ENCODE measurements at regions of chr6 and their contacts with region 1.

Region 1: GRCh38 chr6:89940225-89941027 is 46.2 kb downstream of the GJA10 start:
- DNase-seq: peak; percentile 77
- H3K4me3 ChIP-seq: no peak overlapping the region
- H3K27ac ChIP-seq: no peak overlapping the region
- H3K27me3 ChIP-seq: no peaks in the 10 kb centered on the region
- CTCF ChIP-seq: peak; percentile 81

Region 2: DNA sequence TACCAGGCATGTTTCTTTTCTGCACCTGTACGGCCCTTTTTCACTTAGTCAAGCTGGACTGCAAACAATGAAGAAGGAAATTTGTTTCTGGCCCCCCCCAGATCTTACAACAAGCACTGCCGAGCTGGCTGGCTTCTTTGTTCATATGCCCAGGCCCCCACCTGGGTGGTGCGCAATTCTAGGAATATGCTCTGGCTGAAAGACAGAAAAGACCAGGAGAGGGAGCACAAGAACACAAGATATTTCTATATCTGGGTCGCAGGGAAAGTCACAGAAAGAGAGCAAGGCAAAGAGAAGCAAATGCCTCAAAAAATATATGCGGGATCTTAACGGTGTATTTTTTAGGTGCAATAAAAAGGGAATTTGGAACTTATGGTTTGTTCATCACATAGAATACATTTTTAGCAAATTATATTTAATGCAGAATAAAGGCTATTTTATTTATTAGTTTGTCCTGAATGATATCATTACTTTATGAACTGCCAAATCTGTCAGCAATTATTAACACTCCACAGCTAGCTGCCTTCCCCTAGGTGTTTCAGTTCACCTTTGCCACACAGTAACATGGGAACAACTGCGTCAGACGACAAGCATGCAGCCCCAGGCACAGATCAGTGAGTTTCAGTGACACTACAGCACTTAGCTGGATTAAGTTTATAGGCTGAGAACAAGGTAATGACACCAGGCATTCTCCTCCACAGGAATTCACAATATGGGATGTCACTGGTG is 30.3 kb after region 1 on chr6:
- CTCF ChIA-PET with region 1: interaction called, 28 read pairs
- POLR2A ChIA-PET with region 1: no interaction called
- DNase-seq: no peak
- H3K4me3 ChIP-seq: no peak overlapping the region
- H3K27ac ChIP-seq: no peak overlapping the region
- H3K27me3 ChIP-seq: peaks cover 4% of the 10 kb centered on the region
- CTCF ChIP-seq: peak; percentile 73

Region 3: DNA sequence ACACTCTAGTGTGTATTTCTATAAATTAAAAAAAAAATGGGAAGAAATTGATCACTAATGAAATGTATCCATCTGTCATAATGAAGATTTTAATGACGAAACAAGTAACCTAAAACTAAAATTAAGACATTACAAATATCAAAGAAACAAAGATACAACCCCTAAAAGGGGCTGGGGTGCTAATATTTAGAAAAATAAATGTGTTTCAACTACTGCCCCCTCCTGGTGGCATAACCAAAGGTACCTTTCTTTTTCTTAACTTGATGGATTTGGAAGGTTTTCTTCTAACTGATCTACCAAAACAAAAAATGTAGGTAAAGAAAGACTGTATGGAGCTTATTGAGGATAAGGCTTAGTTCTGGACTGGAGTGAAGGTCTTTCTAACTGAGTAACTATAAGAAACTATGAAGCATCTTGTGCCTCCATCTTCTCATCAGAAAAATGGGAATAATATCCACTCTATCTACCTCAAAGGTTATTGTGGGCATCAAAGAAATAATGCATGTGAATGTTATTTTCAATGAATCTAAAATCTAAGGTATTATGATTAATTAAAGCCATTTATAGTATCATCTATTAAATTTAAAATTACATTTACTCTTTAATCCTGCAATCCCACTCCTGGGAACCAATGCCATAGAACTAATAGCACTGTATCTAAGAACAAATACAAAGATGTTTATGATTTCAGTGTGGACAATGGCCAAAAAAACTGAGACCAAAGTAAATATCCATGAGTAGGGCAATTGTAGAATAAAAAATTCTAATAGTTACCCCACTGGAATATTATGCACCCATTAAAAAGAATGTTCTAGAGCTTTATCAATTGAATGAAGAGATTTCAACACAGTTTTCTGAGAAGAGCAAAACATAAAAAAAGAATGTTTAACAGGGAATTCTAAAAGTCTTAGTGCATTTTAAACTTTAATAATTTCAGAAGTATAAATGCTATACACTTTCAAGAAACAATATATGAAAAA is 239.1 kb after region 1 on chr6:
- CTCF ChIA-PET with region 1: interaction called, 11 read pairs
- POLR2A ChIA-PET with region 1: no interaction called
- DNase-seq: no peak
- H3K4me3 ChIP-seq: no peak overlapping the region
- H3K27ac ChIP-seq: no peak overlapping the region
- H3K27me3 ChIP-seq: no peaks in the 10 kb centered on the region
- CTCF ChIP-seq: peak; percentile 50

Region 4: GRCh38 chr6:90290811-90291420 is 350.5 kb after region 1 on chr6:
- CTCF ChIA-PET with region 1: interaction called, 23 read pairs
- POLR2A ChIA-PET with region 1: interaction called, 7 read pairs
- DNase-seq: no peak
- H3K4me3 ChIP-seq: no peak overlapping the region
- H3K27ac ChIP-seq: no peak overlapping the region
- H3K27me3 ChIP-seq: peaks cover 3% of the 10 kb centered on the region
- CTCF ChIP-seq: no peak

Region 5: GRCh38 chr6:90403489-90404381 is 463.3 kb after region 1 on chr6:
- CTCF ChIA-PET with region 1: interaction called, 15 read pairs
- POLR2A ChIA-PET with region 1: no interaction called
- DNase-seq: peak; percentile 71
- H3K4me3 ChIP-seq: no peak overlapping the region
- H3K27ac ChIP-seq: no peak overlapping the region
- H3K27me3 ChIP-seq: peaks cover 4% of the 10 kb centered on the region
- CTCF ChIP-seq: peak; percentile 24; the same call in 1 of the 2 replicates

Region 6: GRCh38 chr6:90456001-90456400 is 515.6 kb after region 1 on chr6:
- CTCF ChIA-PET with region 1: interaction called, 10 read pairs
- POLR2A ChIA-PET with region 1: no interaction called
- DNase-seq: no peak
- H3K4me3 ChIP-seq: no peak overlapping the region
- H3K27ac ChIP-seq: no peak overlapping the region
- H3K27me3 ChIP-seq: peaks cover 8% of the 10 kb centered on the region
- CTCF ChIP-seq: no peak